ENCODE measurements at regions of chr1 and their contacts with region 1.

Region 1: DNA sequence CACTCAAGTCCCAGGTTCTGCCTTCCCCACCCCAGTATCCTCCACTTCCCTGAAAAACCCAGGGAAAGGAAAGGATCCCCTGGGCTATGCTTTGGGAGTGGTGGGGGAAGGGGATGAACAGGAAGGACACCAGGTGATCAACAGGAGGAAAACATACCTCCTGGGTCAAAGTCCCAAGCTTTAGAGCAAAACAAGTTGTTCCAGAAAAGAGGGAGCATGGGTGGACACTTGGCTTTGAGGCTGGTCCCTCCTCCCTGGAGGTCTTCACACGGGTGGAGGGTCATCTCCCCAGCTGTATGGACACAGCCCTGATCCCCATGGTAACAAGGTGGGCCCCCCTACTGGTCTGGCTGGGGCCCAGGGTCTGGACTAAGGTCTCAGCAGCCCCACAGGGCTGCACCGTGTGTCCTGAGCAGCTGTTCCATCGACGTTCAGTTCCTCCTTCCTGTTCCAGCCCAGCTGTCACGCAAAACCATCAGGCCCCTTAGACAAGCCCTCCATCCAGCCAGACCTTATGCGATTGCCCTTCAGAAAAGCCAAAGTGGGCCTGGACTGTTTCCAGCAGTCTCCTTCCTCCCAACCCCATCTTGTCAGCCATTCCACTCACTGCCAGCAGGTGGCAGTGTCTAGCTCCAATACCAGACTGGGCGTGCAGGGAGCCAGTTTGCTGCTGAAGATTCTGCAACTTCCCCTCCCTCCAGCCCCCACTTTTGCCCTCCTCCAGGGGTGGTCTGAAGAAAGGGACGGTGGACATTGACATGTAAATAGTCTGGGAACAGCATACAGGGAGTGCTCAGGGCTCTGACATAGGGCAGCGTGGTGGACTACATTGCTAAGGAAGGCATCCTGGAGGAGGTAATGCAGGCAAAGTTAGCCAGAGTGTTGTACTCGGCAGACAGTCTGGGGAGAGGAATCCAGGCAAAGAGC is 2.9 kb upstream of the PDZK1IP1 start:
- DNase-seq: peak; percentile 82 to 90 (median 85)
- H3K4me3 ChIP-seq: peak overlapping the region in 1 of 7 experiments; percentile 37
- H3K27ac ChIP-seq: no peak overlapping the region
- H3K4me1 ChIP-seq: peaks cover 0 to 27% (median 21%) of the 10 kb centered on the region in 4 experiments
- H3K27me3 ChIP-seq: no peaks in the 10 kb centered on the region

Region 2: DNA sequence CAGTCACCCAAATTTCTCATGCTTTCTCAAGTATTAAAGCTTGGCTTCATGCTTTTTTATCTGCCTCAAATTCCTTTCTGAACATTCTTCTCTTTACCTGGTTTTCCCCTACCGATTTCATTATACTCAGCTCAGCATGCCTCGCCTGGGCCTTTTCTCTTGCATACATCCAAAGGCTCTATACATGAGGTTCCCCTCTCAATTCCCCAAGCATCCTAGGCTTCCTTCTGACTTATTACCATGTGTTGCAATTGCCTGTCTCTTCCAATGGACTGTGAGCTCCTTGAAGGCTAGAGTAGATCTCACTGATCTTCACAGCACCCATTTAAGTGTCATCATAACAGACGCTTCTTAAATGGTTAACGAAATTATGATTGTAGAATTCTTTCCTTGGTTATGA is 79.5 kb before region 1 on chr1:
- CTCF ChIA-PET with region 1: no interaction called
- POLR2A ChIA-PET with region 1: no interaction called
- DNase-seq: no peak
- H3K4me3 ChIP-seq: no peak overlapping the region
- H3K27ac ChIP-seq: no peak overlapping the region
- H3K4me1 ChIP-seq: no peaks in the 10 kb centered on the region
- H3K27me3 ChIP-seq: no peaks in the 10 kb centered on the region

Region 3: DNA sequence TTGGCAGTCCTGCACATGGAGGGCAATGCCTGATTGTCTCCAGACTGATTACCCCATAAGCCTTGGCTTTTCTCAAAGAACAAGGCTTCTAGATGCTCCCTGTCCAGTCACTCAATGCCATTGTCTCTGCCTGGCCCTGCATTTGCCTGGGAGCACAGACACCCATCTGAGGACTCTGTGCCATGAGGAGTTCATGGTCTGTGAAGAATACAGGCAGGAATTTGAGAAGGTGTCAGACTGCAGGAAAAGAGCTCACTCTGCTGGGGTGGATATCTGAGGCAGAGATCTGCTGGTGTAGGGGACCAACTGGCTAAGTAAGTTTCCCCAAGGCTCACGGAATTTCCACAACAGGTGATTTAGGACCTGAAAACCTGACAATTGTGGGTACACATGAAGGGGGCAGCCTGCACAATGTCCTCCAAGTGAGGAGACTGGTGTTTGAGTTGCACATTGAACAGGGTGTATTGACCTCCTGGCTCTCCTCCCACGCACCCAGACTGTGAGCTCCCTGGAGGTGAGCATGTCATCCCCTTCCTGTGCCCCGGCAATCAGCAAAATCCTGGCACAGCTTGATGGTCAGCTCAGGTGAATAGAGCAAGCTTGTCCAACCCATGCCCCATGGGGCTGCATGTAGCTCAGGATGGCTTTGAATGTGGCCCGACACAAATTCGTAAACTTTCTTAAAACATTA is 54.7 kb before region 1 on chr1:
- CTCF ChIA-PET with region 1: no interaction called
- POLR2A ChIA-PET with region 1: no interaction called
- DNase-seq: no peak
- H3K4me3 ChIP-seq: no peak overlapping the region
- H3K27ac ChIP-seq: no peak overlapping the region
- H3K4me1 ChIP-seq: no peaks in the 10 kb centered on the region
- H3K27me3 ChIP-seq: no peaks in the 10 kb centered on the region

Region 4: GRCh38 chr1:47179017-47179987 is 13.4 kb before region 1 on chr1:
- CTCF ChIA-PET with region 1: interaction called, 173 read pairs
- POLR2A ChIA-PET with region 1: interaction called, 3 read pairs
- DNase-seq: peak; percentile 89 to 94 (median 91)
- H3K4me3 ChIP-seq: peak overlapping the region; percentile 24 to 84 (median 69)
- H3K27ac ChIP-seq: peak overlapping the region in 1 of 2 experiments; percentile 51
- H3K4me1 ChIP-seq: peaks cover 4 to 57% (median 45%) of the 10 kb centered on the region in 4 experiments
- H3K27me3 ChIP-seq: no peaks in the 10 kb centered on the region

Region 5: GRCh38 chr1:47211796-47212269 is 19.1 kb after region 1 on chr1:
- CTCF ChIA-PET with region 1: interaction called, 55 read pairs
- POLR2A ChIA-PET with region 1: interaction called, 3 read pairs
- DNase-seq: peak; percentile 67 to 77 (median 73)
- H3K4me3 ChIP-seq: peak overlapping the region in 5 of 7 experiments; percentile 46 to 67 (median 57)
- H3K27ac ChIP-seq: peak overlapping the region; percentile 85 to 88
- H3K4me1 ChIP-seq: peaks cover 6 to 65% (median 54%) of the 10 kb centered on the region in 4 experiments
- H3K27me3 ChIP-seq: no peaks in the 10 kb centered on the region

Region 6: GRCh38 chr1:47219590-47220220 is 27.0 kb after region 1 on chr1:
- CTCF ChIA-PET with region 1: interaction called, 13 read pairs
- POLR2A ChIA-PET with region 1: no interaction called
- DNase-seq: no peak
- H3K4me3 ChIP-seq: no peak overlapping the region
- H3K27ac ChIP-seq: no peak overlapping the region
- H3K4me1 ChIP-seq: peaks cover 0 to 37% (median 13%) of the 10 kb centered on the region in 4 experiments
- H3K27me3 ChIP-seq: no peaks in the 10 kb centered on the region

Region 7: DNA sequence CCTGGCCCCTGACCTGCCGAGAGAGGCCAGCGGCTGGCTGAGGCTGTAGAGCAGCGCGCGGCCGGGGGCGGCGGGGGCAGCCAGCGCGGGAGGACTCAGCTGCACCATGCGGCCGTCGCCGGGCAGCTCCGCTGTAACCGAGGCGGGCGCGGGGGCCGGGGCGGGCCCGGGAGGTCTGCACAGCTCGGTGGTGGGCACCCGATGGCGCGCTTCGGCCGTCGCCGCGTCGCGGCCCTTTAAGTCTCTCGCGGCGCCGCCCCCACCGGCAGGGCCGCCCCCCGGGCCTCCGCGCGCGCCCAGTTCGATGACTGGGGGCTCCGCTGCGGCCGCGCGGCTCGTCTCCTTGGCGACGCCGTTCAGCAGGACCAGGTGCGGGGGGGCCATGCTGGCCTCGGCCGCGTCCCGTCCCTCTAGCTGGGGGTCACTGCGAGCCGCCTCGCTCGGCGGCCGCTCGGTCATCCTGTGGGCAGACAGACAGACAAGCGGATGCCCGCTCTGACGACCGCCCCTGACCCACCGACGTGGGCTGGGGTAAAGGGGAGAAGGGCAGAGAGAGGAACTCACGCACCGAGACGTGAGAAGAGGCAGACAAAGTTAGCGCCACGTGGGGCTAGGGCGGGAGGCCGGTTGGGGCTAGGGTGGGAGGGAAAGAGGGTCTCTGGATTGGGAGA is 32.8 kb after region 1 on chr1:
- CTCF ChIA-PET with region 1: interaction called, 24 read pairs
- POLR2A ChIA-PET with region 1: interaction called, 3 read pairs
- DNase-seq: peak in 2 of 3 donors; percentile 46 to 52
- H3K4me3 ChIP-seq: peak overlapping the region; percentile 25 to 85 (median 67)
- H3K27ac ChIP-seq: peak overlapping the region in 1 of 2 experiments; percentile 97
- H3K4me1 ChIP-seq: peaks cover 0 to 68% (median 57%) of the 10 kb centered on the region in 4 experiments
- H3K27me3 ChIP-seq: no peaks in the 10 kb centered on the region

Region 8: GRCh38 chr1:47241114-47242113 is 48.7 kb after region 1 on chr1:
- CTCF ChIA-PET with region 1: interaction called, 10 read pairs
- POLR2A ChIA-PET with region 1: no interaction called
- DNase-seq: peak in 2 of 3 donors; percentile 62 to 72
- H3K4me3 ChIP-seq: no peak overlapping the region
- H3K27ac ChIP-seq: no peak overlapping the region
- H3K4me1 ChIP-seq: peaks cover 4 to 38% (median 32%) of the 10 kb centered on the region in 4 experiments
- H3K27me3 ChIP-seq: no peaks in the 10 kb centered on the region